Left colon (tissue), 2 donors: ENCODE measurements at regions of chr14 and their contacts with region 1.

Region 1: DNA sequence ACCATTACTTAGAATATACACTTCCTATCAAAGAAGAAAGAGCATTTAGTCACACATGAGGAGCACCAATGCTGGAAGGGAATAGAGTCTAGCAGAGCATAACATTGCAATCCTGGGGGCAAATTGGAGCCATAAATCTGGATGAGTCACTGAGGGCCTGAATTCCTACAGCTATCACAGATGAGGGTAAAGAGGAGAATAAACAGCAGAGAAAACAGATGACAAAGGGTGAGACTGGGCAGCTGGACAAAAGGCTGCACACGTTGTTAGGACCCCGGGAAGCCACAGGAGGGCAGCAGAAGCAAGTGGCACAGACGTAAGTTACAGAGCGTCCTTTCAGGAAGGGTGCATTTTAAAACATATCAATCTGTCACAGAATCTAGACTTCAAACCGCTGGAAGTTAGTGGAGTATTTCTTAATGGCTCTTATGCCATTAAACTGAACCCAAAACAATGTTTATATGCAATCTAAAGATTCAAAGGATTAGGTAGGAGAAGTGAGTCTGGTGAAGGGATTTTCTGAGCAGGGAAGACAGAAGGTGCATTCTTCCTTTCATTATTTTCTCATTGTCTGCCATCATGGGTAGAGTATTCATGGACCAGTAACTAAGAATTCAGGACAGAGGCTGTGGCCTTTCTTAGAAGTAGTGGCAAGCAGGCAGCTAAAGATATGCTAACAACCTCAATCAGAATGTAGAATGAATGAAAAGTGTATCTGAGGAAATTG is 159.8 kb upstream of the DAAM1 start:
- DNase-seq: peak; percentile 34 to 63
- ATAC-seq: peak; percentile 93

Region 2: GRCh38 chr14:58637391-58638230 is 391.0 kb before region 1 on chr14 and contains the start of gene DACT1:
- intact Hi-C with region 1: loop called in 1 of 2 experiments (anchors 10 kb)
- DNase-seq: peak; percentile 47 to 55
- ATAC-seq: peak; percentile 66
- total RNA-seq, gene DACT1: 1.3 to 3.8 TPM

Region 3: DNA sequence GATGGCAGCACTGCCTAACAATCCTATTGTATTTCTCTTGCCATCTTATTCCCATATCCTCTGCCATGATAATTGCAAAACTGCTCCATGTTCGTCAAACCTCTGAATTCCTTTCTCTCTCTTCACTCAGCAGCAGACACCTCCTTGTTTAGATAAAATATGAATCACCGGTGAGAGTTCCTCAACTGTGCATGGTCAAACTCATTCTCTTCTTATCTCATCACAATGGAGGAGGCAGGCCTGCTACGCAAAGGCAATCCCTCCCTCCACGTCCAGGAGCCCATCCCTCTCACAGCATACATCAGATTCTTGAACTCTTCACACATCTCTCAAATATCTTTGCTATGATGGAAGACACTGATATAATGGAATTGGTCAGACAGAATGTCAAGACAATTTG is 69.7 kb after region 1 on chr14:
- intact Hi-C with region 1: no loop called
- DNase-seq: no peak
- ATAC-seq: no peak

Region 4: GRCh38 chr14:59116984-59117415 is 88.4 kb after region 1 on chr14:
- intact Hi-C with region 1: loop called in 1 of 2 experiments (anchors 10 kb)
- DNase-seq: no peak
- ATAC-seq: peak; percentile 97